ENCODE measurements at regions of chr11 and their contacts with region 1.

Region 1: DNA sequence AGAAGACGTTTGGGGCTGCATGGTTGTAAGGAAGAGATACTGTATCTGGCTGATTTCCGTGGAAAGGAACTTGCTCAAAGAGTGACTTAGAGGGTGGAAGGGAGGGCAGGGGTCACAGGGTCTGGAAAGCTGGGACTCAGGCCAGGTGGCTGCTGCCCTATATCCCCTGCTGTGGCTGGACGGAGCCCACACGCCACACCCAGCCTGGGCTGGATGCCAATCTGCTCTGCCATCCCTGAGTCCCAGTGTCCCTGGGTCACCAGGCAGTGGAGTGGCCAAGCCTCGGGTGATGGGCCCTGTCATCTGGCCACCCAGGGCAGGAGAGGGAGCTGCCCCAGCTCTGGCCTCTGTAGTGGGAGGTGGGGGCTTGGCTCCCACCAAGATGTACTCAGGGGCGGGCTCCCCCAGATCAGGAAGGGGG is 26.5 kb upstream of the KRTAP5-7 start:
- DNase-seq: no peak
- H3K4me3 ChIP-seq: no peak overlapping the region
- H3K27ac ChIP-seq: no peak overlapping the region
- H3K4me1 ChIP-seq: no peaks in the 10 kb centered on the region
- H3K27me3 ChIP-seq: no peaks in the 10 kb centered on the region
- CTCF ChIP-seq: no peak

Region 2: DNA sequence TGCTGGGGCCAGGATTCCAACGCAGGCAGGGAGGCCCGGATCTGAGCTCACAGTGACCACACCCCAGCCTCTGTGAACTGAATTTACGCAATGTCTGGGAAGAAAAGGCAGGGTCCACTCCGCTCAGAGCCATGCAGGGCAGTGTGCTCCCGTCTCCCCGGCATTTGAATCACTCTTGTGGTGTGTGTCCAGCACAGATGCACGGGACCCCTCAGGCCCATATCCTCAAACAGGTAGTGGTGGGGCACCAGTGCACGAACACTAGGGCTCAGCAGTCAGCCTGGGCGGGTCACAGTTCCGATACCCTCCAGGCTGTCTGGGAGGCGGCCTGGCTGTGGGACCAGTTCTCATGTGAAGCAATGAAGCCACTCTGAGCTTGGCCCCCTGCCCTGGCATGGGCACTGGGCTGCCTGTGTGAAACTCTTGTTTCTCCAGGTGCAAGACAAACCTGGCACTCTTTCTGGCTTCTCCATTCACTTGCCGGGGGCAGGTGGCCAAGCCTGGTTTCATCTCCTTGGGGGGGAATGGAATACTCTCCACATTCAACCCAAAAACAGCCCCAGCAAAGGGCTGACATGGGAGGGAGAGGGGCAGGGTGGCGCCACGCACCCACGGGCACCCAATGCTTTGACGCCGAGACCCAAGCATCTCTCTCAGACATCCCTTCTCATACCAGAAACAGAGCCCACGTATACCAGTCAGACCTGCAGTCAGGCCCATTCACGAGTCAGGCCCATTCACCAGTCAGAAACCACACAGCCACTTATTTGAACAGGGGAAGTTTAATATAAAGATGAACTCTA is 66.8 kb before region 1 on chr11:
- CTCF ChIA-PET with region 1: no interaction called
- dilution Hi-C with region 1: no loop called
- in situ Hi-C with region 1: no loop called
- intact Hi-C with region 1: no loop called
- DNase-seq: no peak
- H3K4me3 ChIP-seq: no peak overlapping the region
- H3K27ac ChIP-seq: no peak overlapping the region
- H3K4me1 ChIP-seq: no peaks in the 10 kb centered on the region
- H3K27me3 ChIP-seq: no peaks in the 10 kb centered on the region
- CTCF ChIP-seq: no peak

Region 3: DNA sequence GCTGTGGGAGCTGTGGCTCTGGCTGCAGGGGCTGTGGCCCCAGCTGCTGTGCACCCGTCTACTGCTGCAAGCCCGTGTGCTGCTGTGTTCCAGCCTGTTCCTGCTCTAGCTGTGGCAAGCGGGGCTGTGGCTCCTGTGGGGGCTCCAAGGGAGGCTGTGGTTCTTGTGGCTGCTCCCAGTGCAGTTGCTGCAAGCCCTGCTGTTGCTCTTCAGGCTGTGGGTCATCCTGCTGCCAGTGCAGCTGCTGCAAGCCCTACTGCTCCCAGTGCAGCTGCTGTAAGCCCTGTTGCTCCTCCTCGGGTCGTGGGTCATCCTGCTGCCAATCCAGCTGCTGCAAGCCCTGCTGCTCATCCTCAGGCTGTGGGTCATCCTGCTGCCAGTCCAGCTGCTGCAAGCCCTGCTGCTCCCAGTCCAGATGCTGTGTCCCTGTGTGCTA is 48.1 kb after region 1 on chr11:
- CTCF ChIA-PET with region 1: no interaction called
- dilution Hi-C with region 1: loop called (anchors 5 kb)
- in situ Hi-C with region 1: no loop called
- intact Hi-C with region 1: no loop called
- DNase-seq: no peak
- H3K4me3 ChIP-seq: no peak overlapping the region
- H3K27ac ChIP-seq: no peak overlapping the region
- H3K4me1 ChIP-seq: no peaks in the 10 kb centered on the region
- H3K27me3 ChIP-seq: peaks cover 3% of the 10 kb centered on the region
- CTCF ChIP-seq: no peak